Activated CD4-positive, alpha-beta memory T cell treated with anti-CD3 and anti-CD28 coated beads for 36 hours (primary cell): ENCODE measurements at regions of chr5 and their contacts with region 1.

Region 1: DNA sequence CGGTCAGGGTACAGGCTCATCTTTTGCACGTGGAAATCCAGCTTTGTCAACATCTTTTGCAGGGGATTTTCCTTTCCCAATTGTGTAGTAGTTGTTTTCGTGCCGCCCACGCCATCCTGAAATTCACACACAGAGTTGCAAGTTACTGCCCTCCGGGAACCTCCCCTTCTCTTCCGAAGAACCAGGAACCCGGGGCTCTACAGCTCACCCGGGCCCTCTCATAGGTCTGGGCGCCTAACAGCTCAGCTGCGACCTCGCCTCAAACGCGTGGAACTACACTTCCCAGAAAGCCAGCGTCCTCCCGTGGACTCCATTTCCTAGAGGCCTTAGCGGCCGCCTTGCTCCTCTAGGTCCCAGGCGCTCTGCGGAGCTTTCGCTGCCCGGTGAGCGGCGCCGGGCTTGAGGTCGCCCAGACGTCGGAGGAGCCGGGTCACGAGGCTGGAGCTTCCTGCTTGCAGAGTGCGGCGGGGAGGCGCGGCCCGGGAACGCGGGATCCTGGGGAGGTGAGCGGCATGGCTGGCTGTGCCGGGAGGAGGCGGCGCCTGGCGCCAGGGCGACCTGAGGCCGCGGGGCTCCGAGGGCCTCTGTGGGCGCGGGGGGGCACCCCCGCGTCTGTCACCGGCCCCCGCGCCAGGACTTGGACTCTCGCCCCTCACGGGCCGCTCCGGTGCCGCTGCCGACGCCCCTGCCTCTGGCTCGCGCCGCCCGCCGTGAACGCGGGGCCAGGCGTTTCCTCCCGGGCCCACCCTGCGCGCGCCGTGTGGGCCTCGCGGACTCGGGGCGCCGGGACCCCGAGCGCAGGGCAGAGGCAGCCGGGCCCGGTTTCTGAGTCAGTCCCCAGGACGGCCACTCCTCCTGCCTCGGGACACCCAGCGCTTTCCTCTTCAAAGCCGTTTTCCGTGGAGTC is at the start of gene ZNF354B:
- DNase-seq: peak; percentile 93
- H3K4me3 Mint-ChIP-seq: peak within 1 kb of the TSS; percentile 85
- H3K27ac Mint-ChIP-seq: peak within 1 kb of the TSS; percentile 75
- H3K4me1 Mint-ChIP-seq: peaks cover 26% of the 10 kb centered on the region
- H3K27me3 Mint-ChIP-seq: no peaks in the 10 kb centered on the region
- total RNA-seq, gene ZNF354B: 8.7 to 12.6 TPM

Region 2: DNA sequence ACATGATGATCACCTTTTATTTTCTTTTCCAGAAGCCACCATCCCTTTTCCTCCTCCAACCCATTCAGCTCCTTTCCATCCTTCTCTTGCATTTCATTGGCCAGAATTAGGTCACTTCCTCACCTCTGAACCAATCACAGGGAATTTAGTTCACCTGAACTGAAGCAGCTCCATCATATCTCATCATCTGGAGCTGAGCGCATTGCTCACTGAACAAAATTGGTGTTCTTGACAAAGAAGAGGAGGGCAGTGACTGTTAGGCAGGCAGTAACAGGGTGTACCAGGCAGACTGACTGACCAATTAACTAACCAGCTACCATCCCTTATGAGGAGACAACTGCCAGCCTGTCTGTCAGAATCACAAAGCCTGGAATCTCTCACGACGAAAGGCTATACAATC is 127.6 kb before region 1 on chr5:
- CTCF ChIA-PET with region 1: interaction called, 17 read pairs
- POLR2A ChIA-PET with region 1: interaction called, 8 read pairs
- intact Hi-C with region 1: loop called (anchors 1 kb)
- DNase-seq: no peak
- H3K4me3 Mint-ChIP-seq: no peak overlapping the region
- H3K27ac Mint-ChIP-seq: no peak overlapping the region
- H3K4me1 Mint-ChIP-seq: peaks cover 10% of the 10 kb centered on the region
- H3K27me3 Mint-ChIP-seq: no peaks in the 10 kb centered on the region

Region 3: DNA sequence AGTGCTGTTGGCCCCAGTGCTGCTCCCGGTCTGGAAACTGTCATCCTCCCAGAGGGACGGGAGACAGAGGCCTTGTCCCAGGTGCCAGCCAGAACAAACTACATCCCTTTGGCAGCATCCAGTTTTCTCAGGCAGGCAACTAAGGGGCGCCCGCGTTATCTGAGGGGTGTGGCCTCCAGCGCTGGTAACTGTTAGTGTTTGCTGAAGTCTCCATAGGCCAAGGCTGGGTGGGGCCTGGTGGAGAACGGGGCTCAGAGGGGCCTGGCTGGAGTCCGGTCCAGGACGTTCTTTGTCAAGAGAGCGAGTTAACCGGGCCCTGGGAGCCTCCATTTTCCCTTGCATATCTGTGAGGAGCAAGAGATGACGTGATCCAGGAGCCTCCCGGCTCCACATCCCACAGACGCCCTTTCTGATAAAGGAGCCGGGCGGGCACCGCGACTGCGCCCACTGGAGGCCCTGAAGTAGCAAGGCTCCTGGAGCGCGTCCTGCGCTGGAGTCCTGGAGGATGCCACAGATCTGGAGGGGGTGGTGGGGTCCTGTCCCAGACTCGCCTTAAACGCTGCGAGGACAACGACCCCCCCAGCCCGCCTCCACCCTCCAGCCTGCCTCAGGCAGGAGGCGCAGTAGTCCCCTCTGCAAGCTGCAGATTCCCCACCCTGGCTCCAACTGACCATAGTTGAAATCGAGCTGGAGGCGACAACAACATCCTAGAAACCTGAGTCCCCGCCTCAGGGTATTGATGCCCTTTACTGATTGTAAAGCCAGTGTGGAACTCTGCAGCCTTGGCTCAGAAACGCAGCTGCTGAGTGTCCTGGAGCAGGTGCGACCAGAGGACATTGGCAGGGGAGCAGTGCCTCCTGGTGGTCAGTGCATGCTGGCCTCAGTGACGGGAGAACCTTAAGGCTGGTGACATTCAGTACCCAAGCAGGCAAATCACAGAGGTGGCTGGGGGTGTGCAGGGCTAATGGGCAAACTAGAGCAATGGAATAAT is 20.9 kb before region 1 on chr5:
- CTCF ChIA-PET with region 1: no interaction called
- POLR2A ChIA-PET with region 1: no interaction called
- intact Hi-C with region 1: no loop called
- DNase-seq: peak; percentile 71
- H3K4me3 Mint-ChIP-seq: no peak overlapping the region
- H3K27ac Mint-ChIP-seq: no peak overlapping the region
- H3K4me1 Mint-ChIP-seq: no peaks in the 10 kb centered on the region
- H3K27me3 Mint-ChIP-seq: peaks cover 2% of the 10 kb centered on the region

Region 4: DNA sequence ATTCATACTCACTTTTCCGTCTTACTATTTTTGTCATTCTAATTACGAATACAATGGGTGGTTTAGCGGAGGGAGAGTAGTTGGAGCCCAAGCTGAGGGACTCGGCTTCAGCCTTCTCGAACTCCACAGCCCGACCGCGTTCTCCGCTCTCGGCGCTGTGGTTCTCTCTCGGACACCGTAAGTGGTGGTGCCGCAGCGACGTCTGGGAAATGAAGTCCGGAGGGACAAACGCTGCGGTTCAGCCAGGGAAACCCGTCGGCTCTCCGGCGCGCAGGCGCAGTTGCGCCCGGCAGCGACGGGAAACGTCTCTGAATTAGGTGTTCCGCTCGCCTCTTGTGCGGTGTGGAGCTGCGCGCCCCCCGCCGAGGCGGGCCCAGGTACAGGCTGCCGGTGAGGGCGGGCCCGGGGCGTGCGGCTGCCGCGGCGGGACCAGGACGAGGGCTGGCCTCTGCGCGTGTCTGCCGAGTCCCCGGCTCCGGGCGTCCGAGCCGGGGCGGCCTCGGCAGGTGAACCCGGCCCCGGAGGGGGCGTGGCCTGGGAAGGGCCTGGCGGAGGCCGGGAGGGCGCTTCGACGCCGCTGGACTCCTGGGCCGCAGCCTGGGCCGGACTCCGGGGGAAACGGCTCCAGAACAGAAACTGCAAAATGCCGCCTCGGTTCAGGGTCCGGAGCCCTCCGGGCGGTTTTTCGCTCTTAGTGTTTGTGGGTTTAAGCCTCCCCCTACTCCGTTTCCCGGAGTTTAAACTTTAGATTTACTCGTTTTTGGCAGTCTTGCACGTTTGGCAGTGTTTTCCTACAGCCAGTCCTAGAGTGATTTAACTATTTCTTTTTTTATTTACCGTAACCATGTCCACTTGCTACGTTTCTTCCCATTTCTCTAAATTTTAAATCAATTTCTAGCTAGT is 163.9 kb after region 1 on chr5 and contains the start of gene ZNF879:
- CTCF ChIA-PET with region 1: no interaction called
- POLR2A ChIA-PET with region 1: interaction called, 4 read pairs
- intact Hi-C with region 1: loop called (anchors 1 kb)
- DNase-seq: peak; percentile 96
- H3K4me3 Mint-ChIP-seq: peak within 1 kb of the TSS; percentile 96
- H3K27ac Mint-ChIP-seq: peak within 1 kb of the TSS; percentile 83
- H3K4me1 Mint-ChIP-seq: peaks cover 7% of the 10 kb centered on the region
- H3K27me3 Mint-ChIP-seq: peaks cover 1% of the 10 kb centered on the region
- total RNA-seq, gene ZNF879: 2.4 TPM

Region 5: GRCh38 chr5:179142434-179143198 is 282.7 kb after region 1 on chr5:
- CTCF ChIA-PET with region 1: no interaction called
- POLR2A ChIA-PET with region 1: no interaction called
- intact Hi-C with region 1: loop called (anchors 5 kb)
- DNase-seq: peak; percentile 61
- H3K4me3 Mint-ChIP-seq: no peak overlapping the region
- H3K27ac Mint-ChIP-seq: peak overlapping the region; percentile 77
- H3K4me1 Mint-ChIP-seq: peaks cover 26% of the 10 kb centered on the region
- H3K27me3 Mint-ChIP-seq: no peaks in the 10 kb centered on the region